A549 (cell line): ENCODE measurements at regions of chr12 and their contacts with region 1.

Region 1: DNA sequence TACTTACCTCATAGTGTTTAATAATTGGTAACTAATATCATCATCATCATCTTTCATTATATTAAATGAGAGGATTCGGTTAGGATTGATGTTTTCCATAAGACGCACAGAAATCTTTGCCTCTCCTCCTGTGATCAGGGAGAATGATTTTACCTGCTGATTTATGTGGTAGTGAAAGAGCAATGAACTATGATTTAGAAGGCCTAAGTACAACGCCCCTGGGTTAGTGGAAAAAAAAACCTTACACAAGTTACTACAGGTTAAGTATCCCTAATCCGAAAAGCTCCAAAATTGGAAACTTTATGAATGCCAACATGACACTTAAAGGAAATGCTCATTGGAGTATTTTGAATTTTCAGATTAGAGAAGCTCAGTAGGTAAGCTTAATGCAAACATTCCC is 55.8 kb downstream of the ARID2 start:
- DNase-seq: no peak
- ATAC-seq: no peak
- H3K4me3 ChIP-seq: no peak overlapping the region
- H3K27ac ChIP-seq: no peak overlapping the region
- H3K4me1 ChIP-seq: peaks cover 7% of the 10 kb centered on the region; the same call in 1 of the 3 replicates
- CTCF ChIP-seq: no peak
- EP300 ChIP-seq: no peak
- POLR2A ChIP-seq: no peak
- RAD21 ChIP-seq: no peak

Region 2: DNA sequence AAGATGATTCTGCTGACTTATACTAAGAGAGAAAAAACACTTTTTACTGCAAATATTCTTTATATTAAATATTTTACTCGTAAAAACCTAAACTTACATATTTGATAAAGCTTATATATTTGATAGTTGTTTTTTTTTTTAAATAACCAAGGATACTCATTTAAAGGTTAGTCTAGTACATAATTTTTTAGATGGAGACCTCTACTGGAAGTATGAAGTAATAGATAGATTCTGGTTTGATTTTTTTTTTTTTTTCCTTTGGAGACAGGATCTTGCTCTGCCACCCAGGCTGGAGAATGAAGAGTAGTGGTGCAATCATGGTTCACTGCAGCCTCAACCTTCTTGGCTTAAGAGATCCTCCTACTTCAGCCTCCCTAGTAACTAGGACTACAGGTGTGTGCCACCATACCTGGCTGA is 39.4 kb before region 1 on chr12:
- CTCF ChIA-PET with region 1: no interaction called
- POLR2A ChIA-PET with region 1: no interaction called
- DNase-seq: peak in 1 of 2 experiments; percentile 27
- ATAC-seq: peak; percentile 59 to 76; a peak in 5 of 6 replicates
- H3K4me3 ChIP-seq: no peak overlapping the region
- H3K27ac ChIP-seq: no peak overlapping the region
- H3K4me1 ChIP-seq: no peaks in the 10 kb centered on the region
- CTCF ChIP-seq: peak; percentile 44
- EP300 ChIP-seq: no peak
- POLR2A ChIP-seq: no peak
- RAD21 ChIP-seq: peak; percentile 24; a peak in 1 of 5 replicates

Region 3: GRCh38 chr12:45762185-45763110 is 22.9 kb before region 1 on chr12:
- CTCF ChIA-PET with region 1: interaction called, 10 read pairs
- POLR2A ChIA-PET with region 1: no interaction called
- DNase-seq: peak; percentile 26 to 62
- ATAC-seq: peak; percentile 85 to 92
- H3K4me3 ChIP-seq: no peak overlapping the region
- H3K27ac ChIP-seq: no peak overlapping the region
- H3K4me1 ChIP-seq: peaks cover 12% of the 10 kb centered on the region; the same call in 2 of the 3 replicates
- CTCF ChIP-seq: peak; percentile 74
- EP300 ChIP-seq: no peak
- POLR2A ChIP-seq: no peak
- RAD21 ChIP-seq: peak; percentile 66 to 74